Activated naive CD4-positive, alpha-beta T cell treated with anti-CD3 and anti-CD28 coated beads, Interleukin-2, amount 10 ng/mL, durations not matched to agents 7 days and 5 days (primary cell): ENCODE measurements at regions of chr5 and their contacts with region 1.

Region 1: GRCh38 chr5:78899922-78900362 is 85.2 kb downstream of the ARSB start:
- DNase-seq: peak; percentile 50
- H3K4me3 Mint-ChIP-seq: no peak overlapping the region
- H3K27ac Mint-ChIP-seq: no peak overlapping the region
- H3K4me1 Mint-ChIP-seq: no peaks in the 10 kb centered on the region
- H3K27me3 Mint-ChIP-seq: no peaks in the 10 kb centered on the region

Region 2: DNA sequence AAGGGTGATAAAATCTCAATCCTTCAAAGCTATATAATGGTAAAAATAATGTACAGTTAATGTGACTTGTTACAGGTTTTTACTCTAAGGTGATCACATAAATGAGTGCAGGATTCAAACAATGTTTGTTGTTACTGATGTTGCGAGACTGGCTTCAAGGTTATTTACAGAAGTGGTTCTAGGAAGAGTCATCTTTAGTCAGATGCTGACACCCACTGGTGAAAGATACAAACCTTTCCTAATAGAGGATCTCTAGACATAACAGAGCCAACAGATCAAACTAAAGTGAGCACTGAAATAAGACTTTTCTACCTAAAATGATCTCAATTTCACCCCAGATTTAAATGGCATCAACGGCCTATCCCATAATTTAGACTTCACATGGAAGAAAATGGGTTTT is 64.9 kb after region 1 on chr5:
- CTCF ChIA-PET with region 1: interaction called, 15 read pairs
- DNase-seq: no peak
- H3K4me3 Mint-ChIP-seq: no peak overlapping the region
- H3K27ac Mint-ChIP-seq: no peak overlapping the region
- H3K4me1 Mint-ChIP-seq: no peaks in the 10 kb centered on the region
- H3K27me3 Mint-ChIP-seq: no peaks in the 10 kb centered on the region

Region 3: GRCh38 chr5:78993165-78993564 is 93.2 kb after region 1 on chr5:
- CTCF ChIA-PET with region 1: no interaction called
- DNase-seq: no peak
- H3K4me3 Mint-ChIP-seq: no peak overlapping the region
- H3K27ac Mint-ChIP-seq: peak overlapping the region; percentile 16
- H3K4me1 Mint-ChIP-seq: peaks cover 17% of the 10 kb centered on the region
- H3K27me3 Mint-ChIP-seq: peaks cover 7% of the 10 kb centered on the region